Right ventricle myocardium superior (tissue), 1 donor: ENCODE measurements at regions of chr6 and their contacts with region 1.

Region 1: GRCh38 chr6:52233975-52234823 is 10.1 kb downstream of the IL17F start:
- DNase-seq: no peak
- ATAC-seq: no peak

Region 2: DNA sequence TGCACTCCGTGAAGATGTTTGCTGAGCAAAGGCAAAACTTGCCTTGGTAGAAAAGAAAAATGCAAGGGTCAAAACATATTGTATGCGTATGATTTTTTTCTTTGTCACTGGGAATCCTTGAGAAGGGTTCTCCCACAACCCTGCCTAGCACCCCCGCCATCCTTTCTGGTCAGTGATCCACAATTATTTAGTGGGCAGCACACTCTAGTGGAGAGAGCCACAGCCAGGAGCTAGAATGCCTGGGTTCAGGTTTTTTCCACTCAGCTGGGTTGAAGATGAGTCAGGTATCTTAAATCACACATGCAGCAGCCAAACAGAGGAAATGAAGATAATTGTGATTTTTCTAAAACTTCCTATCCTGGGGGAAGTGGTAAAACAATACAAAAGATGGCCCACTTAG is 389.9 kb before region 1 on chr6:
- intact Hi-C with region 1: no loop called
- DNase-seq: no peak
- ATAC-seq: no peak

Region 3: GRCh38 chr6:52108128-52108527 is 126.1 kb before region 1 on chr6:
- intact Hi-C with region 1: no loop called
- DNase-seq: no peak
- ATAC-seq: no peak

Region 4: GRCh38 chr6:52162940-52163908 is 71.0 kb before region 1 on chr6:
- intact Hi-C with region 1: loop called (anchors 10 kb)
- DNase-seq: no peak
- ATAC-seq: no peak